Prostate gland (tissue), 2 donors: ENCODE measurements at regions of chr11 and their contacts with region 1.

Region 1: GRCh38 chr11:10725114-10725906 is 25.7 kb upstream of the CTR9 start:
- DNase-seq: no peak
- H3K4me3 ChIP-seq: no peak overlapping the region
- H3K27ac ChIP-seq: no peak overlapping the region
- H3K4me1 ChIP-seq: no peaks in the 10 kb centered on the region
- H3K27me3 ChIP-seq: no peaks in the 10 kb centered on the region
- CTCF ChIP-seq: no peak
- POLR2A ChIP-seq: no peak

Region 2: DNA sequence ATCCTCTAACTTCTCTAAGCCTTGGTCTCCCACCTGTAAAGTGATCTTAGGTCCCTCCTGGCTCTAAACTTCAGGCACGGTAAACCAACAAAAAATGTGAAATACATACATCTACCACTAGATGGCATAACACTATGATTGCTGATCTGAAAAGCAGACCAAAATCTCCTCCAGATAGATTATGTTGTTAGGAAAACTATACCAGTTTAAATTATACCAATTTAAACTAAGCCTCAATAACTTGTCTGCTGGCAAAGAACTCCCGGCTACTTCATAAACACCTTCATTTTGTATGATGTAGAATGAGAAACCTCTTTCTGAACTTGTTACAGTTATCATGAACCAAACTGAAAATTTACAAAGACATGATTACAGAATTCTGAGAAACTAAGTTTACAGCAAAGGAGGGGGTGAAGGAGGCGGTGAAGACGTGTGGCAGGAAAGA is 517.2 kb before region 1 on chr11:
- intact Hi-C with region 1: no loop called
- DNase-seq: no peak
- H3K4me3 ChIP-seq: no peak overlapping the region
- H3K27ac ChIP-seq: no peak overlapping the region
- H3K4me1 ChIP-seq: no peaks in the 10 kb centered on the region
- H3K27me3 ChIP-seq: no peaks in the 10 kb centered on the region
- CTCF ChIP-seq: peak; percentile 57 to 87 (median 76)
- POLR2A ChIP-seq: no peak

Region 3: GRCh38 chr11:10575346-10576034 is 149.8 kb before region 1 on chr11:
- intact Hi-C with region 1: loop called (anchors 5 kb)
- DNase-seq: no peak
- H3K4me3 ChIP-seq: no peak overlapping the region
- H3K27ac ChIP-seq: no peak overlapping the region
- H3K4me1 ChIP-seq: no peaks in the 10 kb centered on the region
- H3K27me3 ChIP-seq: no peaks in the 10 kb centered on the region
- CTCF ChIP-seq: no peak
- POLR2A ChIP-seq: no peak

Region 4: GRCh38 chr11:10669258-10670033 is 55.9 kb before region 1 on chr11:
- intact Hi-C with region 1: loop called (anchors 5 kb)
- DNase-seq: no peak
- H3K4me3 ChIP-seq: no peak overlapping the region
- H3K27ac ChIP-seq: peak overlapping the region; percentile 29 to 41
- H3K4me1 ChIP-seq: peaks cover 3% of the 10 kb centered on the region
- H3K27me3 ChIP-seq: no peaks in the 10 kb centered on the region
- CTCF ChIP-seq: no peak
- POLR2A ChIP-seq: no peak

Region 5: GRCh38 chr11:10693509-10694081 is 31.7 kb before region 1 on chr11 and contains the start of gene IRAG1:
- intact Hi-C with region 1: loop called (anchors 5 kb)
- DNase-seq: no peak
- H3K4me3 ChIP-seq: peak within 1 kb of the TSS; percentile 29 to 32
- H3K27ac ChIP-seq: peak within 1 kb of the TSS; percentile 74 to 80
- H3K4me1 ChIP-seq: no peaks in the 10 kb centered on the region
- H3K27me3 ChIP-seq: no peaks in the 10 kb centered on the region
- CTCF ChIP-seq: no peak
- POLR2A ChIP-seq: no peak
- total RNA-seq, gene IRAG1: 14.7 to 43.6 TPM